ENCODE measurements at regions of chr14 and their contacts with region 1.

Region 1: DNA sequence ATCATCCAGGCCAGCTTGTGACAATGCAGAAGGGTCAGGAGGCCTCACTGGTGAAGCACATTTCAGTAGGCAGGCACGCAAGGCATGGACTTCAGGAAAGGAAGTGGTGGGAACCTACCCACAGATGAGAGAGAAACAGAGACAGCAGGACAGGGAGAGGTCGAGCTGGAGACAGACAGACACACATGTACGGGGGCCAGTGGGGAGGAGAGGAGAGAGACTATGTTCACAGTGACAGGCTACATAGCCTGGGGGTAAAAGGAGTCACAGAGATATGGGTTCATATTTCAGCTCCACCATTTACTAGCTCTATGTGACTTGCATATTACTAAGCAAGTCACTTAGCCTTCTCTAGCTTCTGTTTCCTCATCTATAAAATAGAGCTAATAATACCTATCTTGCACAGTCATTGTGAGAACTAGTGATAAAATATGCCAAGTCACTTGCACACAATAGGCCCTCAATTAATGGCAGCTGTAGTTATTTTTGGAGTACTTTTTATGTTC is 91.1 kb upstream of the FUT8 start:
- DNase-seq: peak; percentile 62 to 98
- H3K4me3 ChIP-seq: no peak overlapping the region
- H3K27ac ChIP-seq: peak overlapping the region; percentile 99
- H3K4me1 ChIP-seq: peaks cover 66% of the 10 kb centered on the region
- H3K27me3 ChIP-seq: no peaks in the 10 kb centered on the region
- CTCF ChIP-seq: no peak

Region 2: GRCh38 chr14:64681796-64682710 is 639.4 kb before region 1 on chr14:
- CTCF ChIA-PET with region 1: no interaction called
- POLR2A ChIA-PET with region 1: no interaction called
- intact Hi-C with region 1: no loop called
- DNase-seq: no peak
- H3K4me3 ChIP-seq: no peak overlapping the region
- H3K27ac ChIP-seq: no peak overlapping the region
- H3K4me1 ChIP-seq: peaks cover 9% of the 10 kb centered on the region; the same call in 1 of the 2 replicates
- H3K27me3 ChIP-seq: no peaks in the 10 kb centered on the region
- CTCF ChIP-seq: no peak

Region 3: GRCh38 chr14:65269732-65270131 is 51.7 kb before region 1 on chr14:
- CTCF ChIA-PET with region 1: no interaction called
- POLR2A ChIA-PET with region 1: no interaction called
- intact Hi-C with region 1: no loop called
- DNase-seq: no peak
- H3K4me3 ChIP-seq: no peak overlapping the region
- H3K27ac ChIP-seq: no peak overlapping the region
- H3K4me1 ChIP-seq: peaks cover 23% of the 10 kb centered on the region
- H3K27me3 ChIP-seq: no peaks in the 10 kb centered on the region
- CTCF ChIP-seq: no peak

Region 4: GRCh38 chr14:65287264-65288131 is 33.9 kb before region 1 on chr14:
- CTCF ChIA-PET with region 1: no interaction called
- POLR2A ChIA-PET with region 1: interaction called, 13 read pairs
- intact Hi-C with region 1: no loop called
- DNase-seq: no peak
- H3K4me3 ChIP-seq: no peak overlapping the region
- H3K27ac ChIP-seq: no peak overlapping the region
- H3K4me1 ChIP-seq: peaks cover 29% of the 10 kb centered on the region
- H3K27me3 ChIP-seq: no peaks in the 10 kb centered on the region
- CTCF ChIP-seq: no peak

Region 5: DNA sequence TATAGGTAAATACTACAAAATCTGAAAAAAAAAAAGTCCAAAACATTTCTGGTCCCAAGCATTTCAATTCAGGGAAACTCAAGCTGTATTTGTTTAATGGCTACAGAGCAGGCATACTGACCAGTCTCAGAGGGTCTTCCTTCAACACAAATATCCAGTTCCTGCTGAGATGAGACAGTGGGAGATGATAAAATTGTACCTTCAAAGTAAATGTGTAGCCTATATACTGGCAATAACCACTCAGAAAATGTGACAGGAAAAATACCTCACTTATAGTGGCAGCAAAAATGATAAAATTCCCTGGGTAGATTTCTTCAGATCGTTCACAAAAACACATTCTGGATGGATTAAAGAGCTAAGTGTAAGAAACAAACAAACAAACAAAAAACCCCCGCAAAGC is 10.9 kb before region 1 on chr14:
- CTCF ChIA-PET with region 1: no interaction called
- POLR2A ChIA-PET with region 1: interaction called, 20 read pairs
- intact Hi-C with region 1: no loop called
- DNase-seq: no peak
- H3K4me3 ChIP-seq: no peak overlapping the region
- H3K27ac ChIP-seq: no peak overlapping the region
- H3K4me1 ChIP-seq: no peaks in the 10 kb centered on the region
- H3K27me3 ChIP-seq: no peaks in the 10 kb centered on the region
- CTCF ChIP-seq: no peak

Region 6: GRCh38 chr14:65537762-65538161 is 216.3 kb after region 1 on chr14:
- CTCF ChIA-PET with region 1: no interaction called
- POLR2A ChIA-PET with region 1: no interaction called
- intact Hi-C with region 1: no loop called
- DNase-seq: no peak
- H3K4me3 ChIP-seq: no peak overlapping the region
- H3K27ac ChIP-seq: no peak overlapping the region
- H3K4me1 ChIP-seq: no peaks in the 10 kb centered on the region
- H3K27me3 ChIP-seq: no peaks in the 10 kb centered on the region
- CTCF ChIP-seq: no peak

Measured in PC-9 (cell line).